Activated naive CD8-positive, alpha-beta T cell treated with anti-CD3 and anti-CD28 coated beads, Interleukin-2, amount 10 ng/mL, durations not matched to agents 7 days and 5 days (primary cell): ENCODE measurements at regions of chr7 and their contacts with region 1.

Region 1: DNA sequence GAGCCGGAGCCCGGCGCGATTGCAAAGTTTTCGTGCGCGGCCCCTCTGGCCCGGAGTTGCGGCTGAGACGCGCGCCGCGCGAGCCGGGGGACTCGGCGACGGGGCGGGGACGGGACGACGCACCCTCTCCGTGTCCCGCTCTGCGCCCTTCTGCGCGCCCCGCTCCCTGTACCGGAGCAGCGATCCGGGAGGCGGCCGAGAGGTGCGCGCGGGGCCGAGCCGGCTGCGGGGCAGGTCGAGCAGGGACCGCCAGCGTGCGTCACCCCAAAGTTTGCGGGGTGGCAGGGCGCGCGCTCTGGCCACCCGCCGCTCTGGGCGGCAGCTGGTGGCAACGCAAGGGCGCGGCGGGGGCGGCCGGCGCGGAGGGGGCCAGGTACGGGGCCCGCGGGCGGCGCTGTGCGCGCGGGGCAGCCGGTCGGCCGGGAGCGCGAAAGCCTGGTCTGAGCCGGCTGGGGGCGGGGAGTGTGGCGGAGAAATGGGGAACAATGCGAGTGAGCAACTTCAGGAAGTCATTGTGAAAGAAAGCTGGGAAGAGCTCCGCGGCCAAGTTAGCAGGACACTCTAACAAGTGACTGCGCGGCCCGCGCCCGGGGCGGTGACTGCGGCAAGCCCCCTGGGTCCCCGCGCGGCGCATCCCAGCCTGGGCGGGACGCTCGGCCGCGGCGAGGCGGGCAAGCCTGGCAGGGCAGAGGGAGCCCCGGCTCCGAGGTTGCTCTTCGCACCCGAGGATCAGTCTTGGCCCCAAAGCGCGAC is at the start of gene IKZF1:
- DNase-seq: peak; percentile 77
- ATAC-seq: peak; percentile 25
- H3K4me3 Mint-ChIP-seq: peak within 1 kb of the TSS; percentile 97
- H3K27ac Mint-ChIP-seq: peak within 1 kb of the TSS; percentile 97
- H3K4me1 Mint-ChIP-seq: peaks cover 35% of the 10 kb centered on the region
- H3K27me3 Mint-ChIP-seq: no peaks in the 10 kb centered on the region
- total RNA-seq, gene IKZF1: 383 to 410 TPM

Region 2: GRCh38 chr7:50206453-50207250 is 97.7 kb before region 1 on chr7:
- POLR2A ChIA-PET with region 1: interaction called, 128 read pairs
- DNase-seq: peak; percentile 74
- ATAC-seq: peak; percentile 88
- H3K4me3 Mint-ChIP-seq: peak overlapping the region; percentile 81
- H3K27ac Mint-ChIP-seq: peak overlapping the region; percentile 96
- H3K4me1 Mint-ChIP-seq: peaks cover 81% of the 10 kb centered on the region
- H3K27me3 Mint-ChIP-seq: no peaks in the 10 kb centered on the region

Region 3: GRCh38 chr7:50266635-50267386 is 37.5 kb before region 1 on chr7:
- POLR2A ChIA-PET with region 1: interaction called, 272 read pairs
- DNase-seq: peak; percentile 80
- ATAC-seq: peak; percentile 65
- H3K4me3 Mint-ChIP-seq: peak overlapping the region; percentile 78
- H3K27ac Mint-ChIP-seq: peak overlapping the region; percentile 88
- H3K4me1 Mint-ChIP-seq: peaks cover 77% of the 10 kb centered on the region
- H3K27me3 Mint-ChIP-seq: no peaks in the 10 kb centered on the region

Region 4: DNA sequence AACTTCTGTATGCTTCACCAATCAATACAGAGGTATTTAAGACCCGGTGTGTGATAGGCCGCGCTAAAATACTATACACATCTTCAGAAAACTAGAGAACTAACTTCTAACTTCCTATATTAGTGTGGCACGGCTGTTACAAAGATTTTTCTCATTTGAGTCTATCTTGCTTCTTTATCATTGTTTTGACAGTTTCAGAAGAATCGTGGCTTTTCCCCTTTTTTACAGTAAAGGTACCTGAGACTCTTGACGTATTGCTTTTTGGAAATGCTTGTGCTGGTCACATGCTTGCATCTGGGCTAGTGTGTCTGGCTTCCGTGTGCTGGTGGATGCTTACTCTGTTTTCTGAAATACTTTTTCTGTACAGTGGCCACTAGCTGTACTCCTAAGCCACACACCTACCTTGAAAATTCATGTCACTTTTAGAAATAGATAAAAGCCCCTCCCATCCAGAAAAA is 12.9 kb after region 1 on chr7:
- POLR2A ChIA-PET with region 1: interaction called, 172 read pairs
- DNase-seq: no peak
- ATAC-seq: peak; percentile 76
- H3K4me3 Mint-ChIP-seq: peak overlapping the region; percentile 97
- H3K27ac Mint-ChIP-seq: peak overlapping the region; percentile 97
- H3K4me1 Mint-ChIP-seq: peaks cover 81% of the 10 kb centered on the region
- H3K27me3 Mint-ChIP-seq: no peaks in the 10 kb centered on the region

Region 5: GRCh38 chr7:50359995-50360925 is 55.9 kb after region 1 on chr7:
- POLR2A ChIA-PET with region 1: interaction called, 34 read pairs
- DNase-seq: peak; percentile 76
- ATAC-seq: peak; percentile 90
- H3K4me3 Mint-ChIP-seq: peak overlapping the region; percentile 80
- H3K27ac Mint-ChIP-seq: peak overlapping the region; percentile 99
- H3K4me1 Mint-ChIP-seq: peaks cover 90% of the 10 kb centered on the region
- H3K27me3 Mint-ChIP-seq: no peaks in the 10 kb centered on the region

Region 6: DNA sequence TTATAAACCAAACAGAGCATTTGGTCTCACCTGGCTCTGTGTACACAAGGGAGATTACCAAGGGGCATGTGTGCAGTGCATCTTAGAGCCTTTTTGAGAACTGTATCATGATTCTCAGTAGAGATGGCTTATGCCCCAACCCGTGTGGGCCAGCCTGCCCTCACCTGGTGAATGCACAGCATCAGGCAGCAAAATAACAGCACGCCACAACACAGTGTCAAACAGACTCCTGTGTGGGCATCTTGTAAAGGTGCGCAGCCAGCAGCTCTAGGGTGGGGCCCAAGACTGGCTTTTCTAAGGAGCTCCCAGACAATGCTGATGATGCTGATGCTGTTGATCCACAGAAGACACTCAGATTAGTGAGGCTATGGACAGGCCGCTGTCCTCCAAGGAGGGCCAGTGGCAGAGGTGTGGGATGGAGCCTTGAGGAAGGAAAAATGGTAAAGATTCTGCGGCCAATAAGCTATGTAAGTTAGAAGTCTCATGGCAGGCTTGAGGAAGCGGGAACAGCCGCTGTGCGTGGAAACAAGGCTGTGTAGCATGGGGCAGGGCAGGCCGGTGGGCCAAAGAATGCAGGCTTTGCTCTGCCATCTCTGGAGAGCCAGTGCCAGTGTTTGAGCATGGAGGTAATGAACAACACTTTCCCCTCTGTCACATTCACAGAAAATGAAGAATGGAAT is 162.3 kb after region 1 on chr7:
- POLR2A ChIA-PET with region 1: no interaction called
- DNase-seq: no peak
- ATAC-seq: no peak
- H3K4me3 Mint-ChIP-seq: no peak overlapping the region
- H3K27ac Mint-ChIP-seq: no peak overlapping the region
- H3K4me1 Mint-ChIP-seq: peaks cover 6% of the 10 kb centered on the region
- H3K27me3 Mint-ChIP-seq: peaks cover 4% of the 10 kb centered on the region